Vagina (tissue), 2 donors: ENCODE measurements at regions of chr16 and their contacts with region 1.

Region 1: GRCh38 chr16:69754469-69755310 is at the start of gene NOB1:
- DNase-seq: peak; percentile 95 to 98
- H3K4me3 ChIP-seq: peak within 1 kb of the TSS; percentile 90 to 96
- H3K27ac ChIP-seq: peak within 1 kb of the TSS; percentile 71
- H3K4me1 ChIP-seq: peaks cover 23% of the 10 kb centered on the region
- H3K27me3 ChIP-seq: no peaks in the 10 kb centered on the region
- CTCF ChIP-seq: peak; percentile 96 to 99 (median 97)
- POLR2A ChIP-seq: no peak
- total RNA-seq, gene NOB1: 67.0 TPM

Region 2: DNA sequence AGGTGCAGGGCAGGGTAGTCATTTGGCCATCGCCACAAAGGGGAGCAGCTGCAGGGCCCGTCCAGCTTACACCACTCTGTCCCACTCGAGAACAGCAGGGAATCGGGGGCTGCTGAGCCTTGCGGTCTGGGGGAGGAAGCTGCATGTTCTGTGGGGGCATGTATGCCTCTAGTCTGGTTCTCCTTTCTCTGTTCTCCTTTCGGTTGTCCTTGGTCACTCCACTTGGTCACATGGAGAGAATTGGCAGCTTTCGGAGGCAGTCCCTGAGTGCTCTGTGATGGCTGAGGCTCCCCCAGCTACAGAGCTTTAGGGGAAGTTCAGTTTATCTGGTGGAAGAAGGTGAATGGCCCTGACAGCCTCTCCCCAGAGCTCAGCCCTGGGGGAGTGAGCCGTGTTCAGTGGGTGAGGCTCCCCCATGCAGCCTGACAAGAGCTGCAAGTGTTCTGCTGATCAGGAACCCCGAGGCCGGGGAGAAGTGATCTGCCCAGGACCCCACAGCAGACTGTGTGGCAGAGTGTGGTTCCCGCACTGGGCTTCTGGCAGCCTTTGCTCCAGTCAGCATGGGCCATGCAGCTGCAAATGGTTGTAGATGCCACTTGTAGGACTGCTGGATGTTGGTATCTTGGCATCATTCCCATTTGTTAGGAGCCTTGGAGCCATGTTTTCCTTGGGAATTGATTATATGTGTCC is 1284.1 kb before region 1 on chr16:
- intact Hi-C with region 1: no loop called
- DNase-seq: no peak
- H3K4me3 ChIP-seq: no peak overlapping the region
- H3K27ac ChIP-seq: peak overlapping the region; percentile 26
- H3K4me1 ChIP-seq: peaks cover 14% of the 10 kb centered on the region
- H3K27me3 ChIP-seq: no peaks in the 10 kb centered on the region
- CTCF ChIP-seq: no peak
- POLR2A ChIP-seq: no peak

Region 3: GRCh38 chr16:69396187-69397061 is 358.3 kb before region 1 on chr16:
- intact Hi-C with region 1: loop called (anchors 5 kb)
- DNase-seq: no peak
- H3K4me3 ChIP-seq: no peak overlapping the region
- H3K27ac ChIP-seq: peak overlapping the region; percentile 84
- H3K4me1 ChIP-seq: peaks cover 31% of the 10 kb centered on the region
- H3K27me3 ChIP-seq: no peaks in the 10 kb centered on the region
- CTCF ChIP-seq: peak; percentile 52 to 82 (median 79)
- POLR2A ChIP-seq: no peak

Region 4: DNA sequence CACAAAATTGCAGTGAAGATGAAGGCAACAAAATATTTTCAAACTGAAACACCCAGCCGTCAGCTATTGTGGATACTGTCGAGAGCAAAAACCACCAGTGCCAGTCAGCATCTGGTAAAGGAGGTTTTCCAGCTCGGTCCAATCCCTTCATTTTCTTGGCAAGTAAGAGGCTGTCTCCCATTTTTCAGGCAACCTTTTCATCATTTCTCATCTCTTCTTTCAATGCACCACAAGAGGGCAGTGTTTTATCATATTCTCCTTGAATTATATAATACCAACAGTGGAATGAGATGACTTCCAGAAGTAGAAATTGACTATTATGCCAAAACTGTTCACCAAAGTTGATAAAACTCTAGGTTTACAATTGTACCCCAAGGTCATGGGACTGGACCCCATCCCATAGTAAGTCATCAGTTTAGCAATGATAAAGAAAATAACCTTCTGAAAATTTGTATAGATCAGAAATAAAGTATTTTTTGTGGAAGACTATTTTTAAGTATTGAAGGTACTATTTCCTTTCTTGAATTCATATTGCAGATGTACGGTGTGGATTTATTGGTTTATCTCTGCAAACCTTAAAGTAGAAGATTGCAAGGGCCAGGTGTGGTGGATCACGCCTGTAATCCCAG is 45.1 kb before region 1 on chr16:
- intact Hi-C with region 1: loop called (anchors 2 kb)
- DNase-seq: no peak
- H3K4me3 ChIP-seq: no peak overlapping the region
- H3K27ac ChIP-seq: peak overlapping the region; percentile 52
- H3K4me1 ChIP-seq: peaks cover 19% of the 10 kb centered on the region
- H3K27me3 ChIP-seq: no peaks in the 10 kb centered on the region
- CTCF ChIP-seq: peak; percentile 69 to 83 (median 78)
- POLR2A ChIP-seq: no peak